Activated CD4-positive, alpha-beta T cell treated with anti-CD3 and anti-CD28 coated beads for 36 hours (primary cell): ENCODE measurements at regions of chr19 and their contacts with region 1.

Region 1: GRCh38 chr19:57559404-57560025 is at the start of gene ZNF550:
- DNase-seq: peak; percentile 93
- ATAC-seq: peak; percentile 97
- H3K4me3 Mint-ChIP-seq: peak within 1 kb of the TSS; percentile 98
- H3K27ac Mint-ChIP-seq: peak within 1 kb of the TSS; percentile 93
- H3K4me1 Mint-ChIP-seq: peaks cover 22% of the 10 kb centered on the region
- H3K27me3 Mint-ChIP-seq: no peaks in the 10 kb centered on the region
- total RNA-seq, gene ZNF550: 11.8 to 11.9 TPM

Region 2: DNA sequence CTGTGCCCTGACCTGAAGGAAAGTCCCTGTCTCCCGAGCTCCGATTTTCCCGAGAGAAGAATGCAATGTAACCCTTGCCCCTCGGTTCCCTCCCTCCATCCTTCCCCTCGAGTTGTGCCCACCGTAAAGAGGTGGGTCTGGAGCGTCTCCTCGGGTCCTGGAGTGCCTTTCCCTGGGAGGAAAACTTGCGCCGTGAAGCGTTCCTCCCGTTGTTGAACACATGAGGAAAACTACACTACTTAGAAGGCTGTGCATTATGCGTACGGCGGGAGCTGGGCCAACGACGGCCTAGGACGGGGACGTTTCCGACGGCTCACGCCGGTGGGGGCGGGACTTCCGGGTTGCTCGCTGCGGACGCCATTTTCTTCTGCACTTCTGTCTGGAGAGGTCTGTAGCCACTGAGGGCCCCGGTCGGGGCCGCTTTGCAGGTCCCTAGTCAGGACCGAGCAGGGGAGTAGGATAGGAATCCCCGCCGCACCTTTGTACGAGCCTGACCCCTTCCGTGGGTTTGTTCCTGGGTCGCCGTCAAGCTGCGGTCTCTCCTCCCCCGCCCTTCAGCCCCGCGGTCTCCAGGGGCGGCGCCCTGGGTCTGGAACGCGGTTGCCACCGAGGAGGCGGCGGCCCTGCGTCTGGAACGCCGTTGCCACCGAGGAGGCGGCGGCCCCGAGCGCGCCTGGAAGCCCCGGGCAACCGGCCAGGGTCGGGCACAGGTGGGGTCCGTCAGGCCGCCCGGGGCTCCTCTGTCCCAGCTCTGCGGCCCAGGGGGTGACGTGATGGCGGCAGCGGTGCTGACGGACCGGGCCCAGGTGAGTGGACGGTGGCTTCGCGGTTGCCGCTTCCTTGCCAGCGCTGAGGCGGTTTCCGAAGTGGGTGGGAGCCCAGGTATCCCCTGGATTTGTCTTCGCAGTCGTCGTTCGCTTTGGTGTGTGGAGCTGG is 368.1 kb before region 1 on chr19 and contains the start of gene ZNF264:
- CTCF ChIA-PET with region 1: no interaction called
- POLR2A ChIA-PET with region 1: no interaction called
- intact Hi-C with region 1: loop called in 1 of 2 experiments (anchors 1 kb)
- DNase-seq: peak; percentile 93
- ATAC-seq: peak; percentile 96
- H3K4me3 Mint-ChIP-seq: peak within 1 kb of the TSS; percentile 93
- H3K27ac Mint-ChIP-seq: peak within 1 kb of the TSS; percentile 95
- H3K4me1 Mint-ChIP-seq: peaks cover 28% of the 10 kb centered on the region
- H3K27me3 Mint-ChIP-seq: peaks cover 4% of the 10 kb centered on the region
- total RNA-seq, gene ZNF264: 14.8 to 21.1 TPM

Region 3: GRCh38 chr19:57477191-57478008 is 82.1 kb before region 1 on chr19 and contains the start of gene ZNF772:
- CTCF ChIA-PET with region 1: no interaction called
- POLR2A ChIA-PET with region 1: no interaction called
- intact Hi-C with region 1: loop called in 1 of 2 experiments (anchors 1 kb)
- DNase-seq: peak; percentile 92
- ATAC-seq: peak; percentile 100
- H3K4me3 Mint-ChIP-seq: peak within 1 kb of the TSS; percentile 76
- H3K27ac Mint-ChIP-seq: peak within 1 kb of the TSS; percentile 79
- H3K4me1 Mint-ChIP-seq: peaks cover 17% of the 10 kb centered on the region
- H3K27me3 Mint-ChIP-seq: no peaks in the 10 kb centered on the region
- total RNA-seq, gene ZNF772: 6.5 to 7.5 TPM

Region 4: GRCh38 chr19:57599761-57600383 is 40.4 kb after region 1 on chr19 and contains the start of gene ZNF530:
- CTCF ChIA-PET with region 1: interaction called, 3 read pairs
- POLR2A ChIA-PET with region 1: no interaction called
- intact Hi-C with region 1: loop called in 1 of 2 experiments (anchors 1 kb)
- DNase-seq: peak; percentile 95
- ATAC-seq: peak; percentile 98
- H3K4me3 Mint-ChIP-seq: peak within 1 kb of the TSS; percentile 81
- H3K27ac Mint-ChIP-seq: peak within 1 kb of the TSS; percentile 79
- H3K4me1 Mint-ChIP-seq: peaks cover 12% of the 10 kb centered on the region
- H3K27me3 Mint-ChIP-seq: no peaks in the 10 kb centered on the region
- total RNA-seq, gene ZNF530: 7.1 to 7.2 TPM

Region 5: DNA sequence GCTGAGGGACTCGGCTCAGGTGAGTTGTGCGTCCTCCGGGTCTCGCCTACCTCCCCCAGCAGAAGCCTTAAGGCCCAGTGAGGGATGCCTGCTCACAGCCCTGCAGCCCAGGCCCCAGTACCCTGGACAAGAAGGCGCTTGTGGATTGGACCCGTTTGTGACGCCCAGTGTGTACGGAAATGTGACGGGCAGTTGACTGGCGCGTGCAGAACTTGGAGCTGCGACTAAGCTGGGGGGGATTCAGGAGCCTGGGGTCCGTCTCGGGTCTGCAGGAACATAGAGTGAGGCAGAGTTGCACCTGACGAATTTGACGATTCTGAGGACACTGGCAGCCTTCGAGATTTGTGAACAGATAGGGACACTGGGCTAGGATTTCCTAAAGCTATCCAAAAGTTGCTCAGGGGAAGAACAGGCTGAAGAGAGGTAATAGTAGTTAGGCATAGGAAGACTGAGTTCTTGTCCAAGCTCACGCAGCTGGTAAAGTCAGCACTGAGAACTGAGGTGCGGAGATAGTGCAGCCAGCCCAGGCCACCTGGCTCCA is 122.8 kb after region 1 on chr19:
- CTCF ChIA-PET with region 1: no interaction called
- POLR2A ChIA-PET with region 1: no interaction called
- intact Hi-C with region 1: loop called in 1 of 2 experiments (anchors 1 kb)
- DNase-seq: no peak
- ATAC-seq: no peak
- H3K4me3 Mint-ChIP-seq: peak overlapping the region; percentile 85
- H3K27ac Mint-ChIP-seq: peak overlapping the region; percentile 93
- H3K4me1 Mint-ChIP-seq: peaks cover 31% of the 10 kb centered on the region
- H3K27me3 Mint-ChIP-seq: peaks cover under 1% of the 10 kb centered on the region

Region 6: DNA sequence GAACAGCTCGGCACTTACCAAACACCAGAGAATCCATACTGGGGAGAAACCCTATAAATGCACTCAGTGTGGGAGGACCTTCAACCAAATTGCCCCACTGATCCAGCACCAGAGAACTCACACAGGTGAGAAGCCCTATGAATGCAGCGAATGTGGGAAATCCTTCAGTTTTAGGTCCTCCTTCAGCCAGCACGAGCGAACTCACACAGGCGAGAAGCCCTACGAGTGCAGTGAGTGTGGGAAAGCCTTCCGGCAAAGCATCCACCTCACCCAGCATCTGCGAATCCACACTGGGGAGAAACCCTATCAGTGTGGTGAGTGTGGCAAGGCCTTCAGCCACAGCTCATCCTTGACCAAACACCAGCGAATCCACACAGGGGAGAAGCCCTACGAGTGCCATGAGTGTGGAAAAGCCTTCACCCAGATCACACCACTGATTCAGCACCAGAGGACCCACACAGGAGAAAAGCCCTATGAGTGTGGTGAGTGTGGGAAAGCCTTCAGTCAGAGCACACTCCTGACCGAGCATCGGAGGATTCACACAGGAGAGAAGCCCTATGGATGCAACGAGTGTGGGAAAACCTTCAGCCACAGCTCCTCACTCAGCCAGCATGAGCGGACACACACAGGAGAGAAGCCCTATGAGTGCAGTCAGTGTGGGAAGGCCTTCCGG is 507.9 kb after region 1 on chr19:
- CTCF ChIA-PET with region 1: no interaction called
- POLR2A ChIA-PET with region 1: no interaction called
- intact Hi-C with region 1: no loop called
- DNase-seq: no peak
- ATAC-seq: no peak
- H3K4me3 Mint-ChIP-seq: no peak overlapping the region
- H3K27ac Mint-ChIP-seq: no peak overlapping the region
- H3K4me1 Mint-ChIP-seq: no peaks in the 10 kb centered on the region
- H3K27me3 Mint-ChIP-seq: no peaks in the 10 kb centered on the region